Activated naive CD4-positive, alpha-beta T cell treated with anti-CD3 and anti-CD28 coated beads for 36 hours (primary cell): ENCODE measurements at regions of chr9 and their contacts with region 1.

Region 1: DNA sequence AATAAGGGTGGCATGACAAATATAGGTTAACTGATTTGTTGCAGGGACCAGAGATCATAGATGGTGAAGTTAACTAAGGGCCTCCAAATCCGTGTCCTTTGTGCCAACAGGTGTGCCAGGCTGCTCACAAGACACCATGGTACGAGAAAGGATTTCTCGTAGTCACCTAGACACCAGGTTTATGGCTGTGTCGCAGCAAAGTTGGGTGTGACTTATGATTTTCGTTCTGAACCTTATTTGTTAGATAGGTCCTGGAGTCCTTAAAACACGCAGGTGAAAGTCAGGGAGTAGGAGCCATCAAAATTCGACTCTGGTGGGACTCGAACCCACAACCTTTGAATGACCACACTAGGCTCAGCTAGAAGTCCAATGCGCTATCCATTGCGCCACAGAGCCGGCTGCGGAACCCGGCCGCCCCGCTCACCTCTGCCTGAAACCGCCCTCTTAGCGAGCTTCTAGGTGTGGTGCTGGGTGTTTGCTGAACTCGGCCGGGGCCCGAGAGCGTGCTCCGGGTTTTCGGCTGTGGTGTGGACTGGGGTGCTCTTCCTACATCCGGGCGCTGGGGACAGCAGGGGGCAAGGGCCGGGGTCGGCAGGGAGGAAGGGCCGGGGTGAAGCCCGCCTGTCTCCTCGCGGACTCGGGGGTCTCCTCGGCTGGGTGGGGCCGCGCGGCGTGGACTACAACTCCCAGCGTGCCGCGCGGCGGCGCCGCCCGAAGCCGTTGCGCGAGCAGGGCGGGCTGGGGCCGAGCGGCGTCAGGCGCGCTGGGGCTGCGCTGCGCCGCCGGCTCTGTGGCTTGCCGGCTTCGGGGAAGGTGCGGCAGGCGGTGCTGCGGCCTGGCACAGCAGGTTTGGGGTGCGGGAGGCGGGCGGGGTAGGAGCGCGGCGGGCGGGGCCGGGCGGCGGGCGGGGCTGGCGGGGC is at the start of gene SLC27A4:
- DNase-seq: peak; percentile 78
- H3K4me3 Mint-ChIP-seq: peak within 1 kb of the TSS; percentile 93
- H3K27ac Mint-ChIP-seq: peak within 1 kb of the TSS; percentile 69
- H3K4me1 Mint-ChIP-seq: peaks cover 5% of the 10 kb centered on the region
- H3K27me3 Mint-ChIP-seq: no peaks in the 10 kb centered on the region
- total RNA-seq, gene SLC27A4: 5.7 to 6.8 TPM

Region 2: DNA sequence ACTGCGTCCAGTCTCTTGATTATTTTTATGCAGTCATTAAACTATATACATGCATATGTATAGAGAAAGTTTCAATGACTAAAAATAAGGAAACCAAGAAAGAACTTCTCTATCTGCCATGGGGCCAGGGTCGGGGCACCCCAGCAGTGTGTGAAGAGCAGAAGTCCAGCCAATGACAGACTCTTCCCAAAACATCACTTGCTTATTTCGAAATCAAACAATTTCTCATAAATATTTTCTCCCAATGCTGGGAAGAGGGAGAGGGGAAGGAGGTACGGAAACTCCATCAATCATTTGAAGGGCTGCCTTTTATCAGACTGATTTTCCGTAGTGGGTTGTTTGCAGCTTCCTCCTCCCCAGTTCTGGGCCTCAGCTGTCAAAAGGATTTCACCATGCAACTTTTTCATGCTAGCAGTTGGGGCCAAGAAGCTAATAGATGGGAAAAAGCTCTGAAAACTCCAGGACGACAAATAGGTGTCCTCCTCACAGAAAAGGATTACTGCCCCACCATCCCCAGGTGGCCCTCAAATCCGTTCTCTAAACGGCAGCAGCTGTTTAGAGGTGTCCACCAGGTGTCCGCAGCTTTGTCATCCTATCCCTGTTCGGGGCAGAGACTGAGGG is 538.0 kb before region 1 on chr9:
- CTCF ChIA-PET with region 1: no interaction called
- intact Hi-C with region 1: no loop called
- DNase-seq: no peak
- H3K4me3 Mint-ChIP-seq: peak overlapping the region; percentile 96
- H3K27ac Mint-ChIP-seq: peak overlapping the region; percentile 70
- H3K4me1 Mint-ChIP-seq: peaks cover 36% of the 10 kb centered on the region
- H3K27me3 Mint-ChIP-seq: no peaks in the 10 kb centered on the region

Region 3: DNA sequence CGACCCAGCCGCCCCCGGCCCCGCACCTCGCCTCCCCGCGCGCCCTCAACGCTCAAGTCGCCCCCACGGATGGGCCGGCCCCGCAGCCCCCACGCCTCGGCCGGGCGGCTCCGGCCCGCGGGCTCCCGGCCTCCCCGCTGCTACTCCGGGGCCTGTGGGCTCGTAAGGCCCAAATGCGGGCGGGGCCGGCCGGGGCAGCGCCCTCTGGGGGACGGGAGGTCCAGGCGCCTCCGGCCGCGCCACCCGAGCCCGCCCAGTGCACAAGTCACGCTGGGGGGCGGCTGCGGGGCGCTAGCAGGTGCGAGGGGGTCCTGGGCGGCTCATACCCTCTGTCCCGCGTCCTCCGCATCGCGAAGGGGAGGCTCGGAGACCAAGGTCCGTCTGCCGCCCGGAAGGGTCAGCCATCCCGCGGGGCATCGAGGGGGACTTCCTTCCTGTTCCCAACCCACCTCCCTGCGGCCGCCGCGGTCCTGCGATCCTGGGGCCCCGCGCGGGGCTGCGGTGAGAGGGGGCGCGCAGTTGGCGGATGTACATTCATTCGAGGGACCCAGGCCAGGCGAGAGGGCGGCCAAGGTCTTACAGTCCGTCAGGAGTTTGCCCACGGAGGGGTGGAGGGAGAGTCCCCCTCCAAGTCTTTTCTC is 148.5 kb before region 1 on chr9 and contains the start of gene CIZ1:
- CTCF ChIA-PET with region 1: interaction called, 8 read pairs
- intact Hi-C with region 1: loop called (anchors 2 kb)
- DNase-seq: peak; percentile 71
- H3K4me3 Mint-ChIP-seq: peak within 1 kb of the TSS; percentile 96
- H3K27ac Mint-ChIP-seq: peak within 1 kb of the TSS; percentile 83
- H3K4me1 Mint-ChIP-seq: peaks cover 21% of the 10 kb centered on the region
- H3K27me3 Mint-ChIP-seq: no peaks in the 10 kb centered on the region
- total RNA-seq, gene CIZ1: 79.5 to 82.8 TPM

Region 4: DNA sequence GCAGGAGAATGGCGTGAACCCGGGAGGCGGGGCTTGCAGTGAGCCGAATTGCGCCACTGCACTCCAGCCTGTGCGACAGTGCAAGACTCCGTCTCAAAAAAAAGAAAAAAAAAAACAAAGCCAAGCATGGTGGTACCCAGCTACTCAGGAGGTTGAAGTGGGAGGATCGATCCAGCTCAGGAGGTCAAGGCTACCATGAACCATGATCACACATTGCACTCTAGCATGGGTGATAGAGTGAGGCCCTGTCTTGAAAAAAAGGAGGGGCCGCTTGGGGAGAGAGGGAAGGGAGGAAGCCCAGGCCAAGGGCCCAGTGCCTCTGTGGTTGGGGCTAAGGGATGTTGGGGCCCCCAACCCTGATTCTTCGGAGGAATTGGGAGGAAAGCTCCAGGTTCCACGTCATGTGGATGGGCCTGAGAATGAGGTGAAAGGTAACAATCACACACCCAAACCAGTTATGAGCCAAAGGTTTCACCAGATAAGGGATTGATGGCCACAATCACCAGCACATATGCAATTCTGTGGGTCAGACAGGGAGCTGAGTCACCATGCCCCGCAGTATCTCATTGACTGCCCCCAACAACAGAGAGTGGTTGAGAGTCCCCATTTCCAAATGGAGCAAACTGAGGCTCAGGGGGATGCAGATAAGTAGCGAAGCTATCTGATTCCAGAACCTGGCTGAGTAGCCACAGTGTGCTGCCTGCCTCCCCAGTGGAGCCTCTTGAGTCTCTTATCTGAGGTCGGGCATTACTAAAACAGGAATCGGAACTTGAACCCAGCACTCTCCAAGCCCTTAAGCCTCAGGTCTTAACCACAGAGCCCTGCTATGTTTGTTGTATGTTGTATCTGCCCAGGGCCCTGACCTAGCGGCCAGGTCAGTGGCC is 43.5 kb before region 1 on chr9:
- CTCF ChIA-PET with region 1: interaction called, 6 read pairs
- intact Hi-C with region 1: loop called (anchors 1 kb)
- DNase-seq: no peak
- H3K4me3 Mint-ChIP-seq: no peak overlapping the region
- H3K27ac Mint-ChIP-seq: no peak overlapping the region
- H3K4me1 Mint-ChIP-seq: no peaks in the 10 kb centered on the region
- H3K27me3 Mint-ChIP-seq: no peaks in the 10 kb centered on the region

Region 5: DNA sequence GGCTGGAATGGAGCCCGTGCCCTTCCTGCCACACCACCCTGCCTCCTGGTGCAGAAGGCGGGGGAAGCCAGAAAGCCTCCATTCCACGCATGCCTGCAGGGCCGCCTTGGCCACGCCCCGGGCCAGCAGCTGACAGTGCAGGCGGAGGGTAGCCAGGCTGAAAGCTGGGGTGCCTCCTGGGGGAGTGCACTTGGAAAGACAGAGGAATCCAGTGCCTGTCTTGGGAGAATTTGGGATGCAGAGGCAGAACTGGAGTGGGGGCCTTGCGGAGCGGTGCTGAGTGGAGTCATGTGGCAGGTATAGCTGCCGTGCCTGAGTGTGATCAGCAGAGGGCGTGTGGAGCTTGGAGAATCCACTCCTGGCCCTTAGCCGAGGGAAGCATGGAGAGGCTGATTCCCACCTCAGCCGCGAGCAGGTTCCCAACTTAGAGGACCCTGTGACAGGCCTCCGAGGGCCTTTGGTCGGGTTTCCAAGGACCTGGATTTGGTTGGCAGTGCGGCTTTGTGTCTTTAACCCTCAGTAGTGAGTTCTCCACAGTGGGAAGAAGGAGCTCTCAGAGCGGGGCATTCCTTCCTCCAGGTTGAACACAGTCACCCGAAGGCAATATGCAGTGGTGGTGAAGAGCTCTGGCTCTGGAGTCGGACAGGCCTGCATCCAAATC is 22.1 kb after region 1 on chr9:
- CTCF ChIA-PET with region 1: interaction called, 11 read pairs
- intact Hi-C with region 1: no loop called
- DNase-seq: peak; percentile 86
- H3K4me3 Mint-ChIP-seq: peak overlapping the region; percentile 67
- H3K27ac Mint-ChIP-seq: peak overlapping the region; percentile 61
- H3K4me1 Mint-ChIP-seq: peaks cover 28% of the 10 kb centered on the region
- H3K27me3 Mint-ChIP-seq: no peaks in the 10 kb centered on the region

Region 6: DNA sequence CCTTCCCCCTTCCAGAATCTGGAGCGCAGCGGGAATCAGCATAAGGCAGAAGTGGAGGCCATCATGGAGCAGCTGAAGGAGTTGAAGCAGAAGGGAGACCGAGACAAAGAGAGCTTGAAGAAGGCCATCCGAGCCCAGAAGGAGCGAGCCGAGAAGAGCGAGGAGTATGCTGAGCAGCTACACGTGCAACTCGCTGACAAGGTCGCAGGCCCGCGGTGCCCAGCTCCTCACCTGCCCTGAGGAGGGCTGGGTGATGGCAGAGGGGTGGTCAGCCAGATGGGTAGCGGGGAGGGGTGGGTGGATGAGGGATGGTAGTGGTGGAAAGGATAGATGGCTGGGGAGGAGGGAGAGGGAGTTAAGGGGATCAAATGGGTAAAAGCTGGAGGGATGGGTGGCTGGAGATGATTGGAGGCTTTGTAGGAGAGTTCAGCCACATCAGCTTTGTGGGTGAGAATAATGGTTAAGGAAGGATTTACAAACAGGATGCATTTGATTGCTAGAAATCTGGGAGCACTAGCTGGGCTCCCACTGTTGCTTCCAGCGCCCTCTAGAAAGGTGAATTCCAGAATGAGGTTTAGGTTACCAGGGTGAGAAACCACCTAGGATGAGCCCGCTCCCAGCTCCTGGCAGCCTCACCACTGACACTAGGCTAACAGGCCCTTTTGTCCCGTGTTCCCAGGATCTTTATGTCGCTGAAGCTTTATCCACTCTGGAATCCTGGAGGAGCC is 144.8 kb after region 1 on chr9:
- CTCF ChIA-PET with region 1: no interaction called
- intact Hi-C with region 1: no loop called
- DNase-seq: no peak
- H3K4me3 Mint-ChIP-seq: no peak overlapping the region
- H3K27ac Mint-ChIP-seq: peak overlapping the region; percentile 1
- H3K4me1 Mint-ChIP-seq: no peaks in the 10 kb centered on the region
- H3K27me3 Mint-ChIP-seq: no peaks in the 10 kb centered on the region

Region 7: DNA sequence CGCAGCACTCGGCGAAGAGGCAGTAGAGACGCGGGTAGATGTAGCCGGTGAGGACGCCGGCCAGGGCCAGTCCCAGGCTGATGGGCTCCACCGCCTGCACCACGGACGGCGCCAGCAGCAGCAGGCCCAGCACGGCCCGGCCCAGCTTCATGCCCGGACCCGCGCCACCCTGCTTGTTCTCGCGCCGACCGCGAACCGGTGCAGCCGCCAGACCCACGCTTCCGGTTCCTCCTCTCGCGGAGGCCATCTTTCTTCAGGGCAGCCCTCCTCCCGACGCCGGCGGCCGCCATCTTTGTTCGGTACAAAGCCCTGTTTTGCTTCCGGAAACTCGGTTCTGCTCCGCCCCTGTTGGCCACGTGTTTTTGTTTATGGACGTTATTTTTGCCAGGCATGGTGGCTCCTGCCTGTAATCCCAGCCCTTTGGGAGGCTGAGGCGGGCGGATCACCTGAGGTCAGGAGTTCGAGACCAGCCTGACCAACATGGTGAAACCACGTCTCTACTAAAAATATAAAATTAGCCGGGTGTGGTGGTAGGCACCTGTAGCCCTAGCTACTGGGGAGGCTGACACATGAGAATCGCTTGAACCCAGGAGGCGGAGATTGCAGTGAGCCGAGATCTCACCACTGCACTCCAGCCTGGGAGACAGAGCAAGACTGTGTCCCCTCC is 1484.0 kb after region 1 on chr9 and contains the start of gene TOR1A:
- CTCF ChIA-PET with region 1: no interaction called
- intact Hi-C with region 1: loop called (anchors 10 kb)
- DNase-seq: peak; percentile 96
- H3K4me3 Mint-ChIP-seq: peak within 1 kb of the TSS; percentile 79
- H3K27ac Mint-ChIP-seq: peak within 1 kb of the TSS; percentile 77
- H3K4me1 Mint-ChIP-seq: peaks cover 13% of the 10 kb centered on the region
- H3K27me3 Mint-ChIP-seq: no peaks in the 10 kb centered on the region
- total RNA-seq, gene TOR1A: 26.2 to 28.2 TPM